Activated T-helper 1 cell treated with anti-CD3 and anti-CD28 coated beads, Interleukin-12 subunit alpha, Interleukin-12 subunit beta, Interleukin-2, Interleukin-4 antibody, amounts not matched to agents 30 ng/mL and 10 ng/mL and 1 ng/mL, durations not matched to agents 14 hours and 24 hours and 36 hours (primary cell): ENCODE measurements at regions of chr9 and their contacts with region 1.

Region 1: DNA sequence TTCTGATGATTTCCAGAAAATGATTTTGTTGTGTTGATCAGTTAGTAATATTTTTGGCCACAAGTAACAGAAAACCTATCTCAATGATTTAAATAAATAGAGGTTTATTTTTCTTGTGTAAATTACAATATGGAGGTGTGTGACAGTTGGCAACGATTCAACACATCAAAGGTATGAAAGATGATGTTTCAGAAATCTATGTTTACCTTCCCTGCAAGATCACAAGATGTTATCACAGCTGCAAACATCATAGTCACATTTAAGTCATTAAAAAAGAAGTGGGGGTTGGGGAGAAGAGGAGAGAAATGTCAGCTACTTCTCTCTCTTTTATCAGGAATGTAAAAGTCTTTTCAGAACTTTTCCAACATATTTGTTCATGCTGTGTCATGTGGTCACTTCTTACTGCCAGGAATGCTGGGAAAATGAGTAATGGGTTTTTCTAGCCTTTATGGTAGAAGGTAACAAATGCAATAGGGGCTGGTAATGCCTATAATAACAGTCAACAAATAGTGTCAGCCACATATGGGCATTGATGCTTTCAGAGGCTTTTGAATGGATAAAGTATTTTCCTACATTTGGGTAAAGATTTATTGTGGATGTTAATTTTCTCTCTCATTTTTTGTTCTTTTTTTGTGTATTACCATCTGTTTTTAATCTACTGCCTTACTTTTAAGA is 742.7 kb downstream of the TLE1 start:
- DNase-seq: no peak
- H3K4me3 Mint-ChIP-seq: no peak overlapping the region
- H3K27ac Mint-ChIP-seq: no peak overlapping the region
- H3K4me1 Mint-ChIP-seq: no peaks in the 10 kb centered on the region
- H3K27me3 Mint-ChIP-seq: no peaks in the 10 kb centered on the region

Region 2: GRCh38 chr9:80906728-80907127 is 39.9 kb before region 1 on chr9:
- intact Hi-C with region 1: loop called (anchors 1 kb)
- DNase-seq: no peak
- H3K4me3 Mint-ChIP-seq: no peak overlapping the region
- H3K27ac Mint-ChIP-seq: no peak overlapping the region
- H3K4me1 Mint-ChIP-seq: no peaks in the 10 kb centered on the region
- H3K27me3 Mint-ChIP-seq: no peaks in the 10 kb centered on the region